Naive thymus-derived CD4-positive, alpha-beta T cell (primary cell): ENCODE measurements at regions of chr2 and their contacts with region 1.

Region 1: GRCh38 chr2:61065715-61066709 is at the start of gene SANBR:
- DNase-seq: peak; percentile 78 to 90 (median 83)
- ATAC-seq: peak; percentile 99
- H3K4me3 ChIP-seq: peak within 1 kb of the TSS; percentile 59
- H3K4me3 Mint-ChIP-seq: peak within 1 kb of the TSS; percentile 79 to 98 (median 95)
- H3K27ac ChIP-seq: peak within 1 kb of the TSS; percentile 49
- H3K27ac Mint-ChIP-seq: peak within 1 kb of the TSS; percentile 12 to 94 (median 79)
- H3K4me1 ChIP-seq: peaks cover 0 to 6% of the 10 kb centered on the region in 2 donors
- H3K4me1 Mint-ChIP-seq: peaks cover 0 to 17% (median 5%) of the 10 kb centered on the region in 7 donors
- H3K27me3 ChIP-seq: no peaks in the 10 kb centered on the region
- H3K27me3 Mint-ChIP-seq: peaks cover 0 to 2% (median 0%) of the 10 kb centered on the region in 5 donors
- total RNA-seq, gene SANBR: 2.0 to 5.9 (median 3.6) TPM

Region 2: DNA sequence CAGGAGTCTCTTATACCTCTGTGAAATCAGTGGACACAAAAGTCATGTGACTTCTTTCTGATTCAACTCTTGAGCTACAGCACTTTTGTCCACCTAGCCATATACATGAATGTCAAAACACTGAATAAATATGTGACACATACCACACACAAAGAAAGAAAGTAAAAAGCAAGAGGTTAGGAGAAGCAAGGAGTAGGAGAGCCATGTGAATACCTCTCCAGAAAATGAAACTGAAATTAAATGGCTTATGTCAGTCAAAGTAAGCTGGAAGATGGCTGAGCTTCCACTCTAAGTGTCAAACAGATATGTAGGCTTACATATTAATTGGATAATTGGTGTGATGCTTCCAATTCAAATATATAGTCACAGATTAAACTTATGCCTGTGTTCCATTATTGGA is 1563.0 kb before region 1 on chr2:
- CTCF ChIA-PET with region 1: no interaction called
- POLR2A ChIA-PET with region 1: no interaction called
- intact Hi-C with region 1: no loop called
- DNase-seq: no peak
- ATAC-seq: no peak
- H3K4me3 ChIP-seq: no peak overlapping the region
- H3K4me3 Mint-ChIP-seq: no peak overlapping the region
- H3K27ac ChIP-seq: no peak overlapping the region
- H3K27ac Mint-ChIP-seq: no peak overlapping the region
- H3K4me1 ChIP-seq: no peaks in the 10 kb centered on the region
- H3K4me1 Mint-ChIP-seq: no peaks in the 10 kb centered on the region
- H3K27me3 ChIP-seq: no peaks in the 10 kb centered on the region
- H3K27me3 Mint-ChIP-seq: peaks cover 0 to 10% (median 8%) of the 10 kb centered on the region in 5 donors

Region 3: GRCh38 chr2:61016808-61017555 is 49.0 kb before region 1 on chr2:
- CTCF ChIA-PET with region 1: no interaction called
- POLR2A ChIA-PET with region 1: no interaction called
- intact Hi-C with region 1: loop called (anchors 1 kb)
- DNase-seq: peak; percentile 41 to 75 (median 72)
- ATAC-seq: peak; percentile 79
- H3K4me3 ChIP-seq: peak overlapping the region; percentile 100
- H3K4me3 Mint-ChIP-seq: peak overlapping the region; percentile 93 to 100 (median 97)
- H3K27ac ChIP-seq: peak overlapping the region; percentile 75
- H3K27ac Mint-ChIP-seq: peak overlapping the region; percentile 90 to 99 (median 95)
- H3K4me1 ChIP-seq: peaks cover 14 to 20% of the 10 kb centered on the region in 2 donors
- H3K4me1 Mint-ChIP-seq: peaks cover 23 to 68% (median 48%) of the 10 kb centered on the region in 7 donors
- H3K27me3 ChIP-seq: no peaks in the 10 kb centered on the region
- H3K27me3 Mint-ChIP-seq: no peaks in the 10 kb centered on the region